IMR-90 (cell line): ENCODE measurements at regions of chr1 and their contacts with region 1.

Region 1: DNA sequence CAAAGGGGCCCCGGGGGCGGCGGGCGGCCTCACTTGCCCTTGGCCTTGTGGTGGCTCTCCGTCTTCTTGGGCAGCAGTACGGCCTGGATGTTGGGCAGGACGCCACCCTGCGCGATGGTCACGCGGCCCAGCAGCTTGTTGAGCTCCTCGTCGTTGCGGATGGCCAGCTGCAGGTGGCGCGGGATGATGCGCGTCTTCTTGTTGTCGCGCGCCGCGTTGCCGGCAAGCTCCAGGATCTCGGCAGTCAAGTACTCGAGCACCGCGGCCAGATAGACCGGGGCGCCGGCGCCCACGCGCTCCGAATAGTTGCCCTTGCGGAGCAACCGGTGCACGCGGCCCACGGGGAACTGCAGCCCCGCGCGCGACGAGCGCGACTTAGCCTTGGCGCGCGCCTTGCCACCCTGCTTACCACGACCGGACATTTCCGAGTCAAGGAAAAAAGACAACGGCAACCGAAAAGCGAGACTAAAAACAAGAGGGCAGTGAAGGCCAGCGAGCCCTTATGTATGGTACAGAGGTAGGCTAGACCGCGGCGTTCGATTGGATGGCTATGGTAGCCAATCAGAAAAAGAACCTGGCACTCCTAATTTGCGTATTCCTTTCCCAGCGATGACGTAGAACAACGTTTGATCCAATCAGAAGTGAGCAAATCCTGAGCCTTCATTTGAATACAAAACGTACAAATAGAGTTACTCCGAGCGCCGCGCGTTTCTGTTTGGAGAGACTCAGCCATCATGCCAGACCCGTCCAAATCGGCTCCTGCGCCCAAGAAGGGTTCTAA is 29.6 kb upstream of the RNF187 start:
- DNase-seq: peak; percentile 99
- ATAC-seq: peak; percentile 92
- H3K4me3 ChIP-seq: peak overlapping the region; percentile 50
- H3K27ac ChIP-seq: peak overlapping the region; percentile 50
- H3K4me1 ChIP-seq: 0 out of 2 replicates have a peak, but pooled peaks cover 2% of the 10 kb centered on the region
- H3K27me3 ChIP-seq: no peaks in the 10 kb centered on the region
- CTCF ChIP-seq: peak; percentile 49
- POLR2A ChIP-seq: peak; percentile 96
- RAD21 ChIP-seq: no peak; the same call in 1 of the 2 replicates

Region 2: GRCh38 chr1:228131766-228132165 is 325.8 kb before region 1 on chr1:
- CTCF ChIA-PET with region 1: no interaction called
- POLR2A ChIA-PET with region 1: no interaction called
- dilution Hi-C with region 1: no loop called
- in situ Hi-C with region 1: no loop called
- intact Hi-C with region 1: loop called (anchors 2 kb)
- DNase-seq: no peak
- ATAC-seq: no peak
- H3K4me3 ChIP-seq: no peak overlapping the region
- H3K27ac ChIP-seq: no peak overlapping the region
- H3K4me1 ChIP-seq: no peaks in the 10 kb centered on the region
- H3K27me3 ChIP-seq: peaks cover 21% of the 10 kb centered on the region
- CTCF ChIP-seq: no peak
- POLR2A ChIP-seq: no peak
- RAD21 ChIP-seq: no peak

Region 3: GRCh38 chr1:228226956-228227791 is 230.4 kb before region 1 on chr1:
- CTCF ChIA-PET with region 1: no interaction called
- POLR2A ChIA-PET with region 1: no interaction called
- dilution Hi-C with region 1: no loop called
- in situ Hi-C with region 1: no loop called
- intact Hi-C with region 1: loop called (anchors 5 kb)
- DNase-seq: peak; percentile 63
- ATAC-seq: peak; percentile 40
- H3K4me3 ChIP-seq: no peak overlapping the region
- H3K27ac ChIP-seq: peak overlapping the region; percentile 99
- H3K4me1 ChIP-seq: peaks cover 18% of the 10 kb centered on the region
- H3K27me3 ChIP-seq: no peaks in the 10 kb centered on the region
- CTCF ChIP-seq: peak; percentile 55
- POLR2A ChIP-seq: no peak
- RAD21 ChIP-seq: peak; percentile 46

Region 4: GRCh38 chr1:228405987-228406265 is 51.7 kb before region 1 on chr1:
- CTCF ChIA-PET with region 1: no interaction called
- POLR2A ChIA-PET with region 1: interaction called, 3 read pairs
- dilution Hi-C with region 1: no loop called
- in situ Hi-C with region 1: no loop called
- intact Hi-C with region 1: loop called (anchors 1 kb)
- DNase-seq: peak; percentile 17
- ATAC-seq: peak; percentile 25
- H3K4me3 ChIP-seq: peak overlapping the region; percentile 73
- H3K27ac ChIP-seq: peak overlapping the region; percentile 86
- H3K4me1 ChIP-seq: peaks cover 17% of the 10 kb centered on the region
- H3K27me3 ChIP-seq: no peaks in the 10 kb centered on the region
- CTCF ChIP-seq: no peak
- POLR2A ChIP-seq: no peak
- RAD21 ChIP-seq: no peak

Region 5: DNA sequence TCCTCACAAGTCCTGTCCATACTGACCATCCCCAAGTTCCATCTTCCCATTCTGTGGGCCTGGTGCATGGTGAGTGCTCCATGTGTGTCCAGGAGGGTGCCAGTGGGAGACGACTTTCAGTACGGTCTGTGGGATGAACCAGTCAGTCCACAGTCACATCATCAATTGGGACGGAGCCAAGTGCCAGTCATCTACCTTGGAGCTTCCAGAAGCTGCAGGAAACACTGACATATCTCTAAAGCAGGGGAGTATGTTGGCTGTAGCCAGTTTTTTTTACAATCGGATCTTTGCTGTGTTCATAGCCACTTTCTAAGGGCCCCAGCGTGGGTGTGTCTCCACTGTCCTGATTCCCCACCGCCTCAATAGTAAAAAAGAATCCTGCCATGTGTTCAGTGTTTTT is 27.3 kb before region 1 on chr1:
- CTCF ChIA-PET with region 1: no interaction called
- POLR2A ChIA-PET with region 1: no interaction called
- dilution Hi-C with region 1: no loop called
- in situ Hi-C with region 1: no loop called
- intact Hi-C with region 1: no loop called
- DNase-seq: no peak
- ATAC-seq: no peak
- H3K4me3 ChIP-seq: no peak overlapping the region
- H3K27ac ChIP-seq: no peak overlapping the region
- H3K4me1 ChIP-seq: no peaks in the 10 kb centered on the region
- H3K27me3 ChIP-seq: peaks cover 4% of the 10 kb centered on the region
- CTCF ChIP-seq: no peak
- POLR2A ChIP-seq: no peak
- RAD21 ChIP-seq: no peak

Region 6: DNA sequence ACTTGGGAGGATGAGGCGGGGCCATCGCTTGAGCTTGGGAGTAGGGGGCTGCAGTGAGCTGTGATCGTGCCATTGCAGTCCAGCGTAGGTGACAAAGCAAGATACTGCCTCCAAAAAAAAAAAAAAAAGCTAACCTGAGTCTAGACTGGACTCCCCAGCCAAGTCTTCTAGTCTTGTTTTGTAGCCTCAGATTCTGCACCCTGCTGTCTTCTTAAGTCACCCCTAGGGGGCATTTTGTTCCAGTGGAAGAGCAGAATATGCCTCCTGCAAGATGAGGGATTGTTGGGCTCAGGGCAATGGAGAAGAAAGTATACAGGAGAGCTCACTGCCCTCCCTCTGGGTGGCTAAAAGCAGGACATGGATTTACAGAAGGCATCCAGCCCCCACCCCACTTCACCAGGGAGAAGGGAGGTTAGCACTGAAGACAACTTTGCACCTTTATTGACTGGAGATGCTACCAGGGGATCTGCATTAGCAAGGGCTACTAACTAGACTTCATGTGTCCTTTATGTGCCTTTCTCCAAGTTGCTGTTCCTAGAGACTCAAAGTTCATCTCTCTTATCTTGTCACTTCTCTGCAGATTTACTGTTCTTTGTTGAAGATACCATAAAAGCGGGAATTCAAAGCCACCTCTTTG is 14.3 kb after region 1 on chr1:
- CTCF ChIA-PET with region 1: no interaction called
- POLR2A ChIA-PET with region 1: no interaction called
- dilution Hi-C with region 1: no loop called
- in situ Hi-C with region 1: no loop called
- intact Hi-C with region 1: no loop called
- DNase-seq: peak; percentile 44
- ATAC-seq: peak; percentile 59
- H3K4me3 ChIP-seq: no peak overlapping the region
- H3K27ac ChIP-seq: no peak overlapping the region
- H3K4me1 ChIP-seq: 0 out of 2 replicates have a peak, but pooled peaks cover 1% of the 10 kb centered on the region
- H3K27me3 ChIP-seq: peaks cover 35% of the 10 kb centered on the region
- CTCF ChIP-seq: peak; percentile 40
- POLR2A ChIP-seq: no peak
- RAD21 ChIP-seq: peak; percentile 15; the same call in 1 of the 2 replicates

Region 7: DNA sequence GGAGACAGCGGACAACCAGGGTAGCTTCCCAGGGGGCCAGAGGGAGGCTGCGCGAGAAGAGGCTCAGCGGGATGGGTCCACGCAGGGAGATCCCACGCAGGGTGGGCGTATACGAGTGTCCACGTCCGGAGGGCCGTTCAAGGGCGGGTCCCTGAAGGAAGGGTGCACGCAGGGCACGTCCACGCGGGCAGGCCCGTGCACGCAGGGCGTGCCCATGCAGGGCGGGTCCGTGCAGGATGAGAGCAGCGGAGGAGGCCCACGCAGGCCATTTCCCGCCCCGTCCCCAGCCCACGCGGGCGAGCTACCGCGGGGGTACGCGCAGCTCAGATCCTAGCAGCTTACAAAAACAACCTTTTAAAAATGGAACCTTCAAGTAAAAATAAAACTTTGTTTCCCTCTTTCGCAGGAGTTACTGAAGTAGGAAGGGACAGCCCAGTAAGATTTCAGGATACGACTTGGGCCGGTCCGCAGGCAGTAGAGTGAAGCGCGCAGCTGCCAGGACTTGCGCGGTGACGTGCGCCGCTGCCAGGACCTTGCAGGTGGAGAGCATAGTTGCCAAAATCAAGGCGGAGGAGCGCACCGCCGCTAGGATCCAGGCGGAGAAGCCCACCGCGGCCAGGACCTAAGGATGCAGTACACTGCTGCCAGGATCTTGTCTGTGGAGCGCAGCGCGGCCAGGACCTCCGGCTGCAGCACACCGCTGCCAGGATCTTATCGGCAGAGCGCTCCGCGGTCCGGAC is 29.2 kb after region 1 on chr1:
- CTCF ChIA-PET with region 1: no interaction called
- POLR2A ChIA-PET with region 1: interaction called, 5 read pairs
- dilution Hi-C with region 1: no loop called
- in situ Hi-C with region 1: no loop called
- intact Hi-C with region 1: loop called (anchors 1 kb)
- DNase-seq: peak; percentile 86
- ATAC-seq: peak; percentile 83
- H3K4me3 ChIP-seq: peak overlapping the region; percentile 70
- H3K27ac ChIP-seq: peak overlapping the region; percentile 97
- H3K4me1 ChIP-seq: peaks cover 18% of the 10 kb centered on the region
- H3K27me3 ChIP-seq: no peaks in the 10 kb centered on the region; the same call in 1 of the 2 replicates
- CTCF ChIP-seq: no peak
- POLR2A ChIP-seq: no peak
- RAD21 ChIP-seq: no peak